Activated CD4-positive, alpha-beta memory T cell treated with anti-CD3 and anti-CD28 coated beads for 36 hours (primary cell): ENCODE measurements at regions of chr9 and their contacts with region 1.

Region 1: DNA sequence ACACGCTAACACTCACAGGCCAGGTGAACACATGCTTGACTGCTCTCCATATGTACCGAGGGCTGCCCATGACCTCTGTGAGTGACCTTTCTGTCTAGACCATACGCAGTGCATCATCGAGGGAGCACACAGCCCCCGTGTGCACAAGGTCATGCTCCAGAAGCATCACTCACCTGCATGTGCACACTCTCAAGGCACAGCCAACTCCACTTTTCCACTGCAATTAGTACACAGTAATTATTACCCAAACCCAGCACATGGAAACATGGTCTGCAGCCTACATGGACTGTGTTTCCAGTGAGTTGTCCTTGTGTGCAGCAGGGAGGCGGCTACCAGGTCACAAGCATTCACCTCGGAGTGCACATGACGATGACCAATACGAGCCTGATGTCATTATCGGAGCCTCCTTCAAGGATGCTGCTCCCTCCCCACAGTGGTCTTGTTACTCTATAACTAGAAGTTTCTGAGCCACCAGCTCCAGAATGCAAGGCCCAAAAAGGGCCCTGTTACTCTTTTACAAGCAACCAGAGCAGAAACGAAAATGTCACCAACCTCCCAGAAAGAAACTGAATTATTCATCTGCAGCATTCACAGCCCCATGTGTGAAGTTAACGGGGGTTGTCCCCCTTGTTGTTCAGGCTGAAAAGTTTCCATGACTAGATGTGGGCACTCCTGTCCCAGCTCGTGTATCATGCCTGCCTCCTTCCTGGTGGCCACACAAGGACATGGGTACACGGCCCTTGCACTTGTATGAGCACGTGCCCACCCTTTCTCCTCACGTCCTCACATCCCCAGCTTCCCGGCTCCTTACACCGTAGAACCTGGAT is 31.2 kb downstream of the SEMA4D start:
- DNase-seq: peak; percentile 82
- H3K4me3 Mint-ChIP-seq: peak overlapping the region; percentile 55
- H3K27ac Mint-ChIP-seq: peak overlapping the region; percentile 95
- H3K4me1 Mint-ChIP-seq: peaks cover 97% of the 10 kb centered on the region
- H3K27me3 Mint-ChIP-seq: no peaks in the 10 kb centered on the region

Region 2: DNA sequence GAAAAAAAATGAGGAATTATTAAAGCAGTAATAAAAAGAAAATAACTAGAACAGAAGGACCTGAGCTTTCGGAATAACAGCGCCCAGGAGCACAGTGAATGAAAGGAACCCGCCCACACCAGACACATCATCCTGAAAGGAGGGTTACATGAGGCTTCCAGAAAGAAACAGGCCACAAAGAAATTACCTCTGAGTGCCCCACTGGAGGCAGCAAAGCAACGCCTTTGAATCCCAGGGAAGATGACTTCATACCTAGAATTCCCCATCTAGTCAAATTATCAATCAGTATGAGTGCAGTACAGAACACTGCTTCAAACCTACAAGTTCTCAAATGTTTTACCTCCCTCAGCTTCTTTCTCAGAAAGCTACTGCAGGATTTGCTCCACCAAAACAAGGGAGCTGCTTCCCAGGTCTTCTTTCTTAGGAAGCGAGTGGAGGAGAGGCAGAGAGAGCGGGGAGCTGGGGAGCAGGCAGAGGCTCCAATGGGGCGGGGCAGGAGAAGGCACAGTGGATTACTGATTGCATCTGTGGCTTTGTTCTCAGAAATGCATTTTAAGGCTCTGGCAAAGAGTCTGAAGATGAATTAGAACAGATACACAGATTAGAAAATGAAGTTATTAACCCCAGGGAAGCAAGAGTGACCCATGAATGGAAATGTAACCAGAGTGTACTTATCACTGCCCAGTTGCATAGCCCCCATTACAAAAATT is 55.9 kb before region 1 on chr9:
- CTCF ChIA-PET with region 1: interaction called, 7 read pairs
- POLR2A ChIA-PET with region 1: interaction called, 3 read pairs
- intact Hi-C with region 1: loop called (anchors 1 kb)
- DNase-seq: peak; percentile 86
- H3K4me3 Mint-ChIP-seq: peak overlapping the region; percentile 70
- H3K27ac Mint-ChIP-seq: peak overlapping the region; percentile 91
- H3K4me1 Mint-ChIP-seq: peaks cover 91% of the 10 kb centered on the region
- H3K27me3 Mint-ChIP-seq: no peaks in the 10 kb centered on the region

Region 3: DNA sequence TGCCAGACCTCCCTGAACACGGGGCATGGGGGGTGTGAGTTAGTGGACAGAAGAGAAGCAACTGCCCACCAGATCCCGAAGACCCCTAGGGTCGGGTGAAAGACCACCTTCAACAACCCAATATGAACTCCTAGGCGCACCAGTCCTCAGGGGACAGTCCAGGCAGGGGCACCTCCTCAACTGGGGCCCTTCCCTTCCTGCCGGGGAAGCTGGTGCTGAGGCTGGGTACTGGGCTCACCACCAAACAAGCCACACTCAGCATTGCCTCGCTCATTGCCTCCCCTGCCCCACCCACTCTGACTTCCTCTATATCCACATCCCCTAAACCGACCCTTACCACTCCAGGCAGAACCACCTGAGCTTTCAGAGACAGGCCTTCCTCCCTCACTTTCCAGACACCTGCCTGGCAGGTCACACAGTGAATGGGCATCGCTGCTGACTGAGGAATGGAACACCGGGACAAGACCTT is 11.3 kb before region 1 on chr9:
- CTCF ChIA-PET with region 1: interaction called, 3 read pairs
- POLR2A ChIA-PET with region 1: interaction called, 6 read pairs
- intact Hi-C with region 1: loop called (anchors 1 kb)
- DNase-seq: peak; percentile 58
- H3K4me3 Mint-ChIP-seq: peak overlapping the region; percentile 2
- H3K27ac Mint-ChIP-seq: peak overlapping the region; percentile 88
- H3K4me1 Mint-ChIP-seq: peaks cover 90% of the 10 kb centered on the region
- H3K27me3 Mint-ChIP-seq: no peaks in the 10 kb centered on the region

Region 4: DNA sequence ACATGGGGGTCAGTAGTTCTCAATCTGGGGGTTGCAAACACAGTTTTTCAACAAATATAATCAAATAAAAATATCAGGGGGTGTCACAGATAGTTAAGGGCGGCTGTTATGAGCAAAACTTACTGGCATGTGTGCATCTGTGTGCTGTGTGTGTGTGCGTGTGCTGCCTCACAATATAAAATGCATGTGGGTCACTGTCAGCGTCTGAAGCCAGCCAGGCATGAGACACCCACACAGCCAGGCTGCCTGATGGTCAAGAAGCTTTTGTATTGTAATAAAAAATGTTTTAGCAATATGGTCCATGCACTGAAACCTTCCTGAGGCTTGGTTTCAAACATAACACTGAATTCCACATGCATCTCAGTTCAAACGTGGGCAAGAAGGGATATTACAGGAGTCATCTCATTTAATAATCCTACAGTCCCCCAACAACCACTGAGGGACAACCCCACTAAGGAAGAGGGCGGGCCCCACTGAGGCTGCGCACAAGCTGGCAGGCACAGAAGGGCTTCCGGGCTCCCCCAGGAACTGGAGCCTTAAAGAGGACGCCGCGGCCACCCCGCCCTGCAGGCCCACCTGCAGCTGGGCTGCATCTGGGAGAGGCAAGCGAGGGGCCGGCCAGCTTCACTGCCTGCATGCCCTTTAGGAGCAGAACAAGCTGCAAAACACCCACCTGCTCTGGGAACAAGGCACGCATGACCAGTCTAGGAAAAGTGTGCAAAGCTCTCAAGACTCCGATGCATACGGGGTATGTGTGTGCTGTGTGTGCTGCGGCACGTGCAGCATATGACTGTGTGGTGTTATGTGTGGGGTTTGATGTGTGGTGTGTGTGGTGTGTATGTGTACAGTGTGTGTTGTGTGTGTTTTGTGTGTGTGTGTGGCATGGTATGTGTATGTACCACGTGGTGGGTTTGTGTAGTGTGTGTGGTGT is 17.2 kb after region 1 on chr9:
- CTCF ChIA-PET with region 1: interaction called, 9 read pairs
- POLR2A ChIA-PET with region 1: interaction called, 17 read pairs
- intact Hi-C with region 1: loop called (anchors 2 kb)
- DNase-seq: peak; percentile 74
- H3K4me3 Mint-ChIP-seq: peak overlapping the region; percentile 87
- H3K27ac Mint-ChIP-seq: peak overlapping the region; percentile 90
- H3K4me1 Mint-ChIP-seq: peaks cover 89% of the 10 kb centered on the region
- H3K27me3 Mint-ChIP-seq: no peaks in the 10 kb centered on the region

Region 5: DNA sequence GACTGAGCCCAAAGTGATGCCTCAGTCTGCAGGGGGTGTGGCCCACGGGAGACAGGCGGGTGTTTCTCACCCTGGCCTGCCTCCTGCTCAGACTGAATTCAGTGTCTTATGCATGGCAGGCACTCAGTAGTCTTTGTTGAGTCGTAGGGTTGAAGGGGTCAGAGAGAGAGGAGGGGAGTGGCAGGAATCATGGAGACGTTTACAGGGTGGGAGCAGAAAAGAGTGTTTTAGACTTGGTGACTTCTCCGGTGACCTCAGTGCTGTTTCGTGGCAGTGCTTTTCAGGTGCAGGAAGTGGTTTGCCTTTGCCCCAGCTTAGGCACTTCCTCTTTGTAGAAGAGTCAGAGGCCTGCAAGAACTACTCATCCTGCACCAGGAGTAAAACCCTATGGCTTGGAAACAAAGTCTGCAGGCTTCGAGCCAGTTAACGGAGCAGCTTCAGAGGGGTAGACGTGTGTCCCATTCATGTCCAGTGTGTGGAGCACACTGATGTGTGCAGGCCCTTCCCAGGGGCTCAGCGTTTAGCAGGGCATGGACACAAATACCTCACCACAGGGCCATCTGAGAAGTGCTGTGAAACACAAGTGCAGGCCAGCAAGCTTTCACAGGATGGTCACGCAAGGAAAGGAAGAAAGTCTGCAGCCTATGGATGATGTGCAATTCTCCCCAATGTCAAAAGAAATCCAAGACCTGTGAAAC is 55.7 kb after region 1 on chr9:
- CTCF ChIA-PET with region 1: interaction called, 3 read pairs
- POLR2A ChIA-PET with region 1: interaction called, 7 read pairs
- intact Hi-C with region 1: loop called (anchors 1 kb)
- DNase-seq: peak; percentile 89
- H3K4me3 Mint-ChIP-seq: peak overlapping the region; percentile 58
- H3K27ac Mint-ChIP-seq: peak overlapping the region; percentile 92
- H3K4me1 Mint-ChIP-seq: peaks cover 89% of the 10 kb centered on the region
- H3K27me3 Mint-ChIP-seq: no peaks in the 10 kb centered on the region

Region 6: GRCh38 chr9:89576404-89576839 is 109.8 kb after region 1 on chr9:
- CTCF ChIA-PET with region 1: no interaction called
- POLR2A ChIA-PET with region 1: no interaction called
- intact Hi-C with region 1: no loop called
- DNase-seq: no peak
- H3K4me3 Mint-ChIP-seq: no peak overlapping the region
- H3K27ac Mint-ChIP-seq: no peak overlapping the region
- H3K4me1 Mint-ChIP-seq: peaks cover 8% of the 10 kb centered on the region
- H3K27me3 Mint-ChIP-seq: peaks cover 29% of the 10 kb centered on the region